GM10248 (cell line): ENCODE measurements at regions of chr16 and their contacts with region 1.

Region 1: DNA sequence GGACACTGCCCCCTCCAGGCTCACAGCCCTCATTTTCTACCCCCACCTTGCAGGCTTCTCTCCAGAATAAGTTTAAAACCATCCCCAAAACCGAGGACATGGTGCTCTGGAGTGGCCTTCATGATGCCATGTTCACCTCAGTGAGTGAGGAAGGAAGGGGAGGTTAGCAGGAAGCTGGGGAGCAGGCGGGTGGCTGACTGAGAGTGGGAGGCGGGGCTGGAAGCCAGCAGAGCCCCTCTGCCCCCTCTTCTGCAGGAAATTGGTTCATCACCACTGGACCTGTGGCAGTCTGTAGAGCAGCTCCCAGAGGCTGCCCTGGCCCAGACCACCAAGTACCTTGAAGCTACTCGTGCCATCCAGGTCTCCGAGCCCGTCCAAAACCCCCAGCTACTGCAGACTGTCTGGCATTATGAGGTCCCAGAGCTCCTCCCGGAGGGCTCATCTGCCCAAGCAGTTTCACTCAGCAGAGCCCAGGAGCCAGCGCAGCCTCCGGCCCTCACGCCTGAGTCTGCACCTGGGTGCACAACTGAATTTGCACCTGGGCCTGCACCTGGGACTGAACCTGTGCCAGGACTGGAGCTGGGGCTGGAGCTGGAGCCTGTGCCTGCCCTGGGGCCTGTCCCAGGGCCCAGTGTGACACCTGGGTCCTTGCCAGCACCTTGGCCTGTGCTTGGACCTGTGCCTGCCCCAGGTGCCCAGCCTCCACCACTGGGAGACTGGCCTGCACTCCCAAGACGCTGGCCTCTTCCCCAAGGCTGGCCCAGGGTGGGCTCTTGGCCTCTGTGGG is 19.0 kb downstream of the C16orf96 start:
- DNase-seq: peak; percentile 13
- CTCF ChIP-seq: no peak

Region 2: GRCh38 chr16:4586291-4586690 is 11.2 kb after region 1 on chr16:
- CTCF ChIA-PET with region 1: interaction called, 13 read pairs
- POLR2A ChIA-PET with region 1: no interaction called
- DNase-seq: no peak
- CTCF ChIP-seq: no peak

Region 3: GRCh38 chr16:5188318-5188988 is 613.3 kb after region 1 on chr16:
- CTCF ChIA-PET with region 1: no interaction called
- POLR2A ChIA-PET with region 1: no interaction called
- DNase-seq: no peak
- CTCF ChIP-seq: no peak